Aorta (tissue), 5 donors: ENCODE measurements at regions of chr22 and their contacts with region 1.

Region 1: DNA sequence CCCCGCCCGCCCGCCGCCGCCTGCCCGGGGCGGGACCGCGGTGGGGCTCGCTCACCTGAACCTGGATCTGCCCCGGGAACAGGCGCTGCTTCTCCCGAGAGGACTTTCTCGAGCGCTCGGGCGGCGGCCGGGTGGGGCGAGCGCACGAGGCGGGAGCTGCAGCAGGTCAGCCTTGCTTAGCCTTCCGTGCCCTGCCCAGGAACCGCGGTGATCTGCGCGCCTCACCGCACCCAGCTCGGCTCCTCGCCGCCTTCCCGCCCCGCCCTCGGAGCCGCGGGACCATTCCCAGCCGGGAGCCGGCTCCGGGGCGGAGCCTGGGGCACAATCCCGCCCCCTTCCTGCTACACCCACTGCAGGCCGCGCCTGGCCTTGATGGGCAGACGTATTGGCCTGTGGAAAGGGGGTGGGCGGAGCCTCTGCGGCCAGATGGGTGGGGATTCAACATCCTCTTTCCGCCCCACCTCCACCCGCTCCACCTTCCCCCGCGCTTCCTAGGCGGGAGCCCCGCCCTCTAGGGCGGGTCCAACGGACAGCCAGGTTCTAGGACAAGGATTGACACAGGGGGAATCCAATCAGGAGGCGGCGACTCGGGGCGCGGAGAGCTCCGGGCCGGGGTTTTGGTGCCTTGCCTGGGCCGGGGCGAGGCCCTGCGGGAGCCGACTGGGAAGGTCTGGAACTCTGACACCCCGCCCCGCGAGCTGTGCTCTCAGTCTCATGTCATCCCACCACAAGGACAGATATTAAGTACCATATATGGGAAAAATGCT is at the start of gene MYH9:
- DNase-seq: peak; percentile 100
- ATAC-seq: peak; percentile 95
- H3K4me3 ChIP-seq: peak within 1 kb of the TSS; percentile 60 to 95
- H3K27ac ChIP-seq: peak within 1 kb of the TSS; percentile 81 to 84
- H3K4me1 ChIP-seq: no peaks in the 10 kb centered on the region
- H3K27me3 ChIP-seq: no peaks in the 10 kb centered on the region
- total RNA-seq, gene MYH9: 1,564 to 1,890 TPM

Region 2: DNA sequence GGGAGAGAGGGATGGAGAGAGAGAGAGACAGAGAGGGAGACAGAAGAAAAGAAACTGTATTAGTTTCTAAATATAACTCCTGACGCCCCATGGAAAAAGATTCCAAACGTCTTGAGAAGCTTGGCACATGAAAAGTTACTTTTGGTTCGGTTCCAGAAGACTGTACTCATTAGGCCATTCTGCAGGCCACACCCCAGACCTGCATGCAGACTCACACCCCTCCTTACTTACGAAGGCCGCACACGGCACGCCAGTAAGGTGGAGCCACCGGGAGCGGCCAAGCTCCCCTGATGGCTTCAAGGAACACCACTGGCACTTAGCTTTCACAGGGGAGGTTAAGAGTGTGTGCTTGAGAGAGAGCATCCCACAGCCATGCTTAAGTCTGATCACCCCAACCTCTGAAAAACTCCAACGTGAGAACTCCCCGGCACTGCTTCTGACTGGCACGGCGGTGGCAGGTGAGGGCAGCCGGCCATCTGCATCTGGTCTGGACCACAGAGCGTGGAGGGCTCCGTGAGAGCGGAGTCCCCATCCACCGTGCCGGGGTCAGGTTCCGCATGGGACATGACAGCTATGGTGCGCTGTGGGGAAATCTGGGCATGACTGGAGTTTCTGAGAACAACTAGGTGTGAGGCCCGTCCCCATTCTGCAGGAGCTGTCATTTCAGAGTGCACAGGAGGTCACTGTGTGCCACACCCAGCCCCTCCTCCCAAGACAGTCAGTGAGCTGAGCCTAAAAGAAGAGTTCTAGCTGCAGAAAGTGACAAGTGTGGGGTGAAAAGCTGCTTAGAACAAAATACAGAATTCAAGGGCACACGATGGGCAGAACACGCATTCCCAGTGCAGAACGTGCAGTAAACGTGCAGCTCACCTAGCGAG is 62.5 kb before region 1 on chr22:
- intact Hi-C with region 1: loop called (anchors 2 kb)
- DNase-seq: peak; percentile 83 to 90
- ATAC-seq: peak; percentile 58
- H3K4me3 ChIP-seq: no peak overlapping the region
- H3K27ac ChIP-seq: peak overlapping the region; percentile 99
- H3K4me1 ChIP-seq: peaks cover 2 to 3% of the 10 kb centered on the region in 2 donors
- H3K27me3 ChIP-seq: no peaks in the 10 kb centered on the region

Region 3: DNA sequence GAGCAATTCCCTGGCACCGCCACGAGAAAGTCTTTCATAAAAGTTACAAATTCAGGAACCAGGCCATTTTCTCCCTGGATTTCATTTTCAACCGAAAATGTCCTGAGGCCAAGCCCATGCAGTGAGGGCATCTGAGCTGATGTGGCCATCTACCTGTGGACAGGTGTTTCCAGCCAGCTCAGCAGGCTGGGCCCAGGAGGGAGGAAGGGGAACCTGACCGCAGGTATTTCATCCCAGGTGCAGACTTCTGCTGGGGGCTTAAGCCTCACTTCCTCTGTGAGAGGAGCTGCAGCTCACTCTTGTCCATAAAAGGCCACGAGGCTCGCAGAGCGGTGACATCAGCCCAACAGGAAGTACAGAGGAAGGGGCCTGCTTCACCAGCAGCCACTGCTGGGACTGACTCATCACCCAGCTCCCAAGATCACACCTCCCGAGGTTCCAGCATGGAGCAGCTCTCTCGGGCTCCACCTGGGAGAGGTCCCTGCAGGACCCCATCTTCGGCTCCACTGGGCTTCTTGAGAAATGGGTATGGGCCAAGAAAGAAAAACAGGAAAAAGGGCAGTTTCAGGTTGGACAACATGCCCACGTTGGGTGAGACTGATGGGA is 56.5 kb before region 1 on chr22:
- intact Hi-C with region 1: loop called in 1 of 2 experiments (anchors 2 kb)
- DNase-seq: peak; percentile 93 to 95
- ATAC-seq: peak; percentile 69
- H3K4me3 ChIP-seq: no peak overlapping the region
- H3K27ac ChIP-seq: peak overlapping the region; percentile 99 to 100
- H3K4me1 ChIP-seq: peaks cover 3 to 14% of the 10 kb centered on the region in 2 donors
- H3K27me3 ChIP-seq: no peaks in the 10 kb centered on the region

Region 4: DNA sequence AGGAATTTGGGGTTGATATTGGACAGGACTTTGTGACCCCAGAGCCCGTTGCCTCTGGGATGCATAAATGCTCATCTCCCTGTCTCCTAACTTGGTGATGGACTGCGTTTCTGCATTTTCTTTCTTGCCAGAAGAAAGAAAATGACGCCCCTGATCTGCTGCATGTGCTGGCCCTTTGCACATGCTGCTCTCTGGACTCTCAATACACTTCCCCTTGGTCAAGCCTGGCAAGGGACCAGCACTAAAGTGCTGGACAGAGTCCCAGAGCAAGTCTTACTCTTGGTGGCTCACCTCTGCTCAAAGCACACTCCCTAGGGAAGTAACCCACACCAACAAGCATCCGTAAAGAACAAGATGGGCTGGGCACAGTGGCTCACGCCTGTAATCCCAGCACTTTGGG is 40.8 kb before region 1 on chr22:
- intact Hi-C with region 1: loop called in 1 of 2 experiments (anchors 5 kb)
- DNase-seq: peak; percentile 77 to 85
- ATAC-seq: no peak
- H3K4me3 ChIP-seq: no peak overlapping the region
- H3K27ac ChIP-seq: peak overlapping the region in 1 of 2 donors; percentile 77
- H3K4me1 ChIP-seq: peaks cover 0 to 12% of the 10 kb centered on the region in 2 donors
- H3K27me3 ChIP-seq: no peaks in the 10 kb centered on the region

Region 5: DNA sequence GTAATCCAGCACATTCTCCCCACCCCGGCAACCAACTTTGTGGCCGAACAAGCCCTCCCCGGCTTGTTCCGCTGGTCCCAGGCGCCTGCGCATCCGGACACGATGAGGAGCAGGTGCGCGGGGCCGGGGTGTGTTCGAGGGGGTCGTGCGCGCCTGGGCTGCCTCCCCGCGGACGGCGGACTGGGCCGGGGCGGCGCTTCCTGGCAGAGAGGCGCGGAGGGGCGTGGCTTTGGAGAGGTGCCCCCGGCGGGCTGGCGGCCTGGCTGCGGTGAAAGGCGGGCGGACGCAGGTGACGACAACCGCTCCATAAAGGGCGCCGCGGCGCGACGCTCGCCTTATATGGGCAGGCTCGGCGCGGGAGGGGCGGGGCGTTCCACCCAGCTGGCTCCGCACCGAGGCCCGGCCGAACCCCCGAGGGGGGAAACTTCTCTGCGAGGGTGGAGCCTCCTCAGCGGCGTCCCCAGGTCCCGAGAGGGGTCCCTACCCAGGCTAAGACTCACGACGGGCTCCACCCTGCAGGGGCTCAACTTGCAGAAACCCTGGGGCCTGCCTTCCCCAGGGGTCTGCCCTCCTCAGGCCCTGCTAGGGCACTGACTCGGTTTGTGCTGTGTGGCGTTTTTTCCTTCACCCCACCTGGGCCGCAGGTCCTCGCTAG is 67.1 kb after region 1 on chr22:
- intact Hi-C with region 1: loop called in 1 of 2 experiments (anchors 2 kb)
- DNase-seq: peak; percentile 96 to 98
- ATAC-seq: peak; percentile 92
- H3K4me3 ChIP-seq: peak overlapping the region; percentile 12 to 35
- H3K27ac ChIP-seq: peak overlapping the region; percentile 78 to 96
- H3K4me1 ChIP-seq: no peaks in the 10 kb centered on the region
- H3K27me3 ChIP-seq: no peaks in the 10 kb centered on the region

Region 6: GRCh38 chr22:36470162-36470993 is 82.4 kb after region 1 on chr22:
- intact Hi-C with region 1: loop called (anchors 2 kb)
- DNase-seq: peak; percentile 89 to 90
- ATAC-seq: peak; percentile 88
- H3K4me3 ChIP-seq: no peak overlapping the region
- H3K27ac ChIP-seq: peak overlapping the region in 1 of 2 donors; percentile 90
- H3K4me1 ChIP-seq: no peaks in the 10 kb centered on the region
- H3K27me3 ChIP-seq: no peaks in the 10 kb centered on the region